ENCODE measurements at regions of chr17 and their contacts with region 1.

Region 1: GRCh38 chr17:7435221-7435675 is at the start of gene TMEM102:
- H3K4me3 Mint-ChIP-seq: peak within 1 kb of the TSS; percentile 86
- H3K27ac Mint-ChIP-seq: peak within 1 kb of the TSS; percentile 90
- H3K4me1 Mint-ChIP-seq: peaks cover 39% of the 10 kb centered on the region
- H3K27me3 Mint-ChIP-seq: peaks cover 23% of the 10 kb centered on the region

Region 2: GRCh38 chr17:7393613-7394451 is 41.4 kb before region 1 on chr17:
- intact Hi-C with region 1: no loop called
- H3K4me3 Mint-ChIP-seq: peak overlapping the region; percentile 95
- H3K27ac Mint-ChIP-seq: peak overlapping the region; percentile 89
- H3K4me1 Mint-ChIP-seq: peaks cover 38% of the 10 kb centered on the region
- H3K27me3 Mint-ChIP-seq: no peaks in the 10 kb centered on the region

Region 3: DNA sequence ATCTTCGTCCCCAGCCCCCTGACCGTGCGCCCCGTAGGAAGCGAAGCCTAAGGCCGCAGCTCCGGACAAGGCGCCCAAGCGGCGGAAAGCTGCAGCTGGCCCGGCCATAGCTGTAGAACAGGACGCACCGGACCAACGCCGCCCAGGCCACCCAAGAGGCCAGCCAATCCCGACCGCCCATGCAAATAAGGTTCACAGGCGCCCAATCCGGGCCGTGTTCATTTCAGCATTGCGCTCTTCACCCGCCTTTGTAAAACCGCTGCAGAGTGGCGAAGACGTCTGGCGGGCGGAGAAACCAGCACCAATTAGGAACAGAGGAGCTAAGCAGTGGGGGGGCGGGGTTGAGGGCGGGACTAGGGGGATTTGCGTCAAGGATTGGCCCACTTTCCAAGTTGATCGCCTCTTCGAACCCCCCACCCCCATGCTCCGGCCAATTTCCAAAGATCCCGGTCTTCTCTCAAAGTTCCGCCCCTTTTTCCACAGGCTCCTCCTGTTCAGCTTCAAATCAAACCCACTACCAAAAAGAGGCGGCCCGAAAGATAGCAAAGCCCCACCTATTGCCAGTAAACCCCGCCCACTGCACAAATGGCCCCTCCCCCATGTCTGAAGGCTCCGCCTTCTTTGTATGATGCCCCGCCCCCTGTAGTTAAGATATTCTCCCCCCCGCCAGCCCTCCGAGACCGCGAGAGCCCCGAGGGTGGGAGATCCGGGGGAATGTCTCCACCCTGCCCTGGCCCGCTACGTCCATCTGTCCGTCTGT is 31.1 kb before region 1 on chr17 and contains the start of gene TMEM256:
- intact Hi-C with region 1: loop called (anchors 1 kb)
- H3K4me3 Mint-ChIP-seq: peak within 1 kb of the TSS; percentile 84
- H3K27ac Mint-ChIP-seq: peak within 1 kb of the TSS; percentile 92
- H3K4me1 Mint-ChIP-seq: peaks cover 7% of the 10 kb centered on the region
- H3K27me3 Mint-ChIP-seq: peaks cover 32% of the 10 kb centered on the region

Region 4: DNA sequence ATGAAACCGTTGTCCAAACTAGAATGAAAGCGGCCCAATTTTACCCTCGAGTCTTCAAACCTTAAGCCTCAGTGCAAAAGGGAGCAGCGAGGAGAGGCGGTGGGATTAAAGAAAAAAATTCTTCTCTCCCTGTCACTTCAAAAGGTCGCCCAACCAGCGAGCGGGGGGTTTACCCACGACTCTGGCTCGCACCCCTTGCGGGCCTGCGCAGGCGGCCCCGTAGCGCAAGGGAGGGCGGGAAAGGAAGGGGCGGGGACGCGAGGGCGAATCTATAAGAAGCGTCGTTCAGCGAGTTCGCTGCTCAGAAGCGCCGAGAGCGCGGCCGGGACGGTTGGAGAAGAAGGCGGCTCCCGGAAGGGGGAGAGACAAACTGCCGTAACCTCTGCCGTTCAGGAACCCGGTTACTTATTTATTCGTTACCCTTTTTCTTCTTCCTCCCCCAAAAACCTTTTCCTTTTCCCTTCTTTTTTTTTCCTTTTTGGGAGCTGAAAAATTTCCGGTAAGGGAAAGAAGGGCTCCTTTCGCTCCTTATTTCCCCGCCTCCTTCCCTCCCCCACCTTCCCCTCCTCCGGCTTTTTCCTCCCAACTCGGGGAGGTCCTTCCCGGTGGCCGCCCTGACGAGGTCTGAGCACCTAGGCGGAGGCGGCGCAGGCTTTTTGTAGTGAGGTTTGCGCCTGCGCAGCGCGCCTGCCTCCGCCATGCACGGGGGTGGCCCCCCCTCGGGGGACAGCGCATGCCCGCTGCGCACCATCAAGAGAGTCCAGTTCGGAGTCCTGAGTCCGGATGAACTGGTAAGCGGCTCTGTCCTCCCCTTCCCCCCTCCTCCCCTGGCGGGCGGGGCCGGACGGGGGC is 49.0 kb after region 1 on chr17 and contains the start of gene POLR2A:
- intact Hi-C with region 1: loop called (anchors 1 kb)
- H3K4me3 Mint-ChIP-seq: peak within 1 kb of the TSS; percentile 97
- H3K27ac Mint-ChIP-seq: peak within 1 kb of the TSS; percentile 100
- H3K4me1 Mint-ChIP-seq: peaks cover 76% of the 10 kb centered on the region
- H3K27me3 Mint-ChIP-seq: no peaks in the 10 kb centered on the region